GM12878 (cell line): ENCODE measurements at regions of chr16 and their contacts with region 1.

Region 1: GRCh38 chr16:15704545-15704987 is 54.5 kb downstream of the NDE1 start:
- DNase-seq: no peak
- ATAC-seq: peak; percentile 92
- H3K4me3 ChIP-seq: no peak overlapping the region
- H3K27ac ChIP-seq: no peak overlapping the region
- H3K4me1 ChIP-seq: no peaks in the 10 kb centered on the region
- H3K27me3 ChIP-seq: no peaks in the 10 kb centered on the region
- CTCF ChIP-seq: peak; percentile 76 to 80 (median 79)
- EP300 ChIP-seq: no peak
- POLR2A ChIP-seq: peak; percentile 9; the same call in 1 of the 2 replicates
- RAD21 ChIP-seq: peak; percentile 69

Region 2: DNA sequence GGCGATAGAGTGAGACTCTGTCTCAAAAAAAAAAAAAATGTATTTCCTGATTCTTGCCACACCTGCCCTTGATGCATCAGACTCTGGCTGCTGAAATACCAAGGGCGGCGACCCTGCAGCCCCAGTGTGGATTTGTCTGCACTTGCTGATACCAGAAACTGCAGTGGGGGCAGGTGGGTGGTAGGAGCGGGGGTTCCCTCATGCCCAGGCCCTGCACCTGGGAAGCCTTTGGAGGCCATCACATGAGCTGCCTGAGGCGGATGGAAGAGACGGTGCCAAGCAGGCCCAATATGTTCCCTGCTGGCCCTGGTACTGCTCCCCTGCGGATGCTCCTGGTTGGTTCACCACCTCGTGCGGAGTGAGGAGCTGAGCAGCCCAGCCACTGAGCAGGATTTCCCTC is 112.2 kb before region 1 on chr16:
- CTCF ChIA-PET with region 1: no interaction called
- POLR2A ChIA-PET with region 1: no interaction called
- RAD21 ChIA-PET with region 1: no interaction called
- SMC1A ChIA-PET with region 1: no interaction called
- in situ Hi-C with region 1: no loop called
- intact Hi-C with region 1: no loop called
- DNase-seq: no peak
- ATAC-seq: no peak
- H3K4me3 ChIP-seq: no peak overlapping the region
- H3K27ac ChIP-seq: no peak overlapping the region
- H3K4me1 ChIP-seq: peaks cover 6% of the 10 kb centered on the region
- H3K27me3 ChIP-seq: no peaks in the 10 kb centered on the region
- CTCF ChIP-seq: no peak
- EP300 ChIP-seq: no peak
- POLR2A ChIP-seq: no peak
- RAD21 ChIP-seq: no peak

Region 3: GRCh38 chr16:15694499-15694898 is 10.1 kb before region 1 on chr16:
- CTCF ChIA-PET with region 1: interaction called, 18 read pairs
- POLR2A ChIA-PET with region 1: no interaction called
- RAD21 ChIA-PET with region 1: interaction called, 3 read pairs
- SMC1A ChIA-PET with region 1: no interaction called
- in situ Hi-C with region 1: no loop called
- intact Hi-C with region 1: no loop called
- DNase-seq: no peak
- ATAC-seq: no peak
- H3K4me3 ChIP-seq: no peak overlapping the region
- H3K27ac ChIP-seq: no peak overlapping the region
- H3K4me1 ChIP-seq: no peaks in the 10 kb centered on the region
- H3K27me3 ChIP-seq: no peaks in the 10 kb centered on the region
- CTCF ChIP-seq: no peak
- EP300 ChIP-seq: no peak
- POLR2A ChIP-seq: no peak
- RAD21 ChIP-seq: no peak

Region 4: GRCh38 chr16:15835136-15835878 is 130.7 kb after region 1 on chr16:
- CTCF ChIA-PET with region 1: no interaction called
- POLR2A ChIA-PET with region 1: no interaction called
- RAD21 ChIA-PET with region 1: no interaction called
- SMC1A ChIA-PET with region 1: no interaction called
- in situ Hi-C with region 1: no loop called
- intact Hi-C with region 1: no loop called
- DNase-seq: peak; percentile 37
- ATAC-seq: peak; percentile 71
- H3K4me3 ChIP-seq: no peak overlapping the region
- H3K27ac ChIP-seq: no peak overlapping the region
- H3K4me1 ChIP-seq: peaks cover 5% of the 10 kb centered on the region; the same call in 1 of the 2 replicates
- H3K27me3 ChIP-seq: no peaks in the 10 kb centered on the region
- CTCF ChIP-seq: no peak
- EP300 ChIP-seq: no peak
- POLR2A ChIP-seq: no peak
- RAD21 ChIP-seq: no peak